HEK293 (cell line): ENCODE measurements at regions of chr1 and their contacts with region 1.

Region 1: GRCh38 chr1:40951943-40952743 is 27.4 kb upstream of the CTPS1 start:
- H3K4me3 ChIP-seq: no peak overlapping the region
- H3K27ac ChIP-seq: no peak overlapping the region
- H3K4me1 ChIP-seq: no peaks in the 10 kb centered on the region
- CTCF ChIP-seq: peak; percentile 88

Region 2: DNA sequence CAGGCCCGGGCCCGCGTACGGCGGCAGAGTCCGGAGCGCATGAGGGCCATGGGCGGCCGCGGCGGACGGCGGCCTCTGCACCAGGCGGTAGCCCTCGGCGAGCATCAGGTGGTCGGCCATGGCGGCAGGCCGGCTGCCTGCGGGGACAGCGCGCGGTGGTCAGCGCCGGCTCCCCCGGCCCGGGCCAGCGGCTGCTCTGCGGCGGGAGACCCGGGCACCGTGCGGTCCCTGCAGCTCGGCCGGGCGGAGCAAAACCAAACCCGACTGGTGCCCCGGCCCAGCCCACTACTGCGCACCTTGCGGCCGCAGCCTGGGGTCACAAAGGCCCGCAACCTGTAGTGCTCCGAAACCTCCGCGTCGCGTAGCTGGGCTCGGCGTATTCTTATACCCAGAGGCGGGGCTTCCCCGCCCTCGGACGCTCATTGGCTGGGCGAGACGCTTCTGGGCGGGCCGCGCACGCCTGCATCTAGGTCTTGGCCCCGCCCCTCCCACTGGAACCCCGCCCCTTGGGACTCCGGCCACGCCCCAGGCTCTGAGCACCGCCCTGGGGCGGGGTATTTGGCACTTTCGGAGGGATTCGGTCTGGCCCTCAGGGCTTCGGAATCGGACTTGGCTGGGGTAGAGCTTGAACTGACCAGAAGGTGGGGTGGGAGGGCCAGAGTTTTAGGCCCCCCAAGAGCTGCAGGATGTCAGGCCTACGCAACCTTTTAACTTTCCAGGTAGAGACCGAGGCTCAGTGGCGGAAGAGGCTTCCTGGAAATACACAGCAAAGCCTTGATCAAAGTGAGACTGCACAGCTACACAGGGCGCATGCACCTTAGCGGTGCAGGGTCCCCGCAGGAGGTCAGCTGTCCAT is 89.9 kb before region 1 on chr1 and contains the start of gene CITED4:
- CTCF ChIA-PET with region 1: interaction called, 415 read pairs
- POLR2A ChIA-PET with region 1: interaction called, 5 read pairs
- H3K4me3 ChIP-seq: peak within 1 kb of the TSS; percentile 41
- H3K27ac ChIP-seq: no peak within 1 kb of the TSS
- H3K4me1 ChIP-seq: no peaks in the 10 kb centered on the region
- CTCF ChIP-seq: peak; percentile 18; the same call in 1 of the 2 replicates

Region 3: DNA sequence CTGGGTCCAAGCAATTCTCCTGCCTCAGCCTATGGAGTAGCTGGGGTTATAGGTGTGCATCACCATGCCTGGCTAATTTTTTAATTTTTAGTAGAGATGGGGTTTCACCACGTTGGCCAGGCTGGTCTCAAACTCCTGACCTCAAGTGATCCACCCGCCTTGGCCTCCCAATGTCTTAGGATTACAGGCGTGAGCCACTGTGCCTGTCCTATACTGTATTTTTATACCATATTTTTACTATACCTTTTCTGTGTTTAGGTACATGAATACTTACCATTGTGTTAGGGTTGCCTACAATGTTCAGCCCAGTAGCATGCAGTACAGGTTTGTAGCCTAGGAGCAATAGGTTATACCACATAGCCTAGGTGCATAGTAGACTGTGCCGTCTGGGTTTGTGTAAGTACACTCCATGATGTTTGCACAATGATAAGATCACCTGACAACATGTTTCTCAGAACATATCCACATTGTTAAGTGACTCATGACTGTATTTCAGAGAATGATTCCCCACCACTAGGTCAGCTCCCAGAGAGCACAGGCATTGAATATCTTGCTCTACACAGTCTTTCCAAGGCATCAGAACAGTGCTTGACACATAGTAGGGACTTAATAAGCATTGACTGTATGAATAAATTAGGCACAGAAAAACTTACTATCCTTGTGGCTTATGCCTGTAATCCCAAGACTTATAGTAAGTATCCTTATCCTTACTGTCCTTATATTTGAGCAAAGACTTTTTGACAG is 83.9 kb before region 1 on chr1:
- CTCF ChIA-PET with region 1: interaction called, 17 read pairs
- POLR2A ChIA-PET with region 1: no interaction called
- H3K4me3 ChIP-seq: no peak overlapping the region
- H3K27ac ChIP-seq: no peak overlapping the region
- H3K4me1 ChIP-seq: no peaks in the 10 kb centered on the region
- CTCF ChIP-seq: no peak

Region 4: GRCh38 chr1:40939320-40940059 is 12.7 kb before region 1 on chr1:
- CTCF ChIA-PET with region 1: interaction called, 21 read pairs
- POLR2A ChIA-PET with region 1: no interaction called
- H3K4me3 ChIP-seq: no peak overlapping the region
- H3K27ac ChIP-seq: no peak overlapping the region
- H3K4me1 ChIP-seq: no peaks in the 10 kb centered on the region
- CTCF ChIP-seq: no peak

Region 5: DNA sequence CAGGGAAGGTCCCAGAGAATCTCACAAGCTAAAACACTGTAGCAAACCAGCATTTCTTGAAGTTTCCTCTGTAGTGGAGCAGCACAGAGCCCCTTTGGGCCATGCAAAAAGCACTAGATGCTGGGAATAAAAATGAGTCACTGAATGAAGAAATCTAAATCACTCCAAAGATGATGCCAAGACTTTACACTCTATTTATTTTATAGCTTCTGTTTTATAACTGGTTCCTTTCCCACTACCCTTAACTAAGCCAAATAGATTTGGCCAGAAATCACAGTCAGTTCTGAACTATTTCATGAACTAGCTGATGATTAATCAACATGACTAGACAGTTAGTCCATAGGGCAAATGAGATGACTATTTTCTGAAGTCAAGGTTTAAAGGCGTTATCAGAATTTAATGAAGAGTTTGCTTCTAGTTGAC is 200.5 kb after region 1 on chr1:
- CTCF ChIA-PET with region 1: no interaction called
- POLR2A ChIA-PET with region 1: no interaction called
- H3K4me3 ChIP-seq: no peak overlapping the region
- H3K27ac ChIP-seq: no peak overlapping the region
- H3K4me1 ChIP-seq: no peaks in the 10 kb centered on the region
- CTCF ChIP-seq: no peak